ENCODE measurements at regions of chr21 and their contacts with region 1.

Region 1: GRCh38 chr21:33199516-33200217 is 30.1 kb upstream of the IFNAR2 start:
- DNase-seq: peak; percentile 73
- CTCF ChIP-seq: peak; percentile 76

Region 2: DNA sequence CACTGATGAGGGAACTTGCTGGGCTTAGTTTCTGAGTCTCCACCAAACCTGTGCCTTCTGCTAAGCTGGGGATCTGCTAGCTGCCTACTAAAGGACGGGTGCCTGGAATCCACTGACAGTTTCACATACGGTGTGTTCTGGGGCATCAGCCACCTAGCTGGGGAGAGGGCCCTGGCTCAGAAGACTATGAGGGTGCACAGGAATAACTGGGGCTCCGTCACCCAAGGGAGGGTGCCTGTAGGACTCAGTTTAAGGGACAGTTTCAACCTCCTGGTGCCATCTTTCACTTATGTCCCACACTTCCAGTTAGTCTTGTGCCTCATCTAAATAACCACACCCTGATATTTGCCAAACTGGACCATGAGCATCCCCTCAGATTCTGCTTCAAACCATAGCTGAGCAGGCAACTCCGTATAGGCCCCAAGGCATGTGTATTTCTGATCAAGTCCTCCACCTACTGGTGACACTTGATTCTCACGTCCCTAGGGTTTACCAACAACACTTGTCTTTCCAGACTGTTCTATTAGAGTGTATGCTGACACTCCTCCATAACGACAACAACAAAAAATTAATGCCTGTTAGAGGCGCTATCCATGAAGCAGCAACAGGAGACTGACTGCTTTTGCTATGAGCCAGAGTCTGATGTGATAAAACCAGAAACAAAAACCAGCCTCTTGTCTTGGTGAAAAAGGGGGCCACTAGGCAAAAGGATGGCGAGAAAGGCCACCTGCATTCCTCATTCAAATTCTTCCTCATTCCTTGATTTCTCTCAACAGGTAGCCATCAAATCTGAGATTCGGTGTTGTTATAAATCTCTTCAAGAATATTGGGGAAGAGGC is 373.1 kb before region 1 on chr21:
- CTCF ChIA-PET with region 1: interaction called, 23 read pairs
- POLR2A ChIA-PET with region 1: no interaction called
- DNase-seq: peak; percentile 72
- CTCF ChIP-seq: peak; percentile 70

Region 3: GRCh38 chr21:33185852-33186251 is 13.8 kb before region 1 on chr21:
- CTCF ChIA-PET with region 1: interaction called, 35 read pairs
- POLR2A ChIA-PET with region 1: interaction called, 4 read pairs
- DNase-seq: no peak
- CTCF ChIP-seq: no peak

Region 4: GRCh38 chr21:33266050-33266788 is 66.6 kb after region 1 on chr21 and contains the start of gene IL10RB:
- CTCF ChIA-PET with region 1: interaction called, 14 read pairs
- POLR2A ChIA-PET with region 1: no interaction called
- DNase-seq: peak; percentile 89
- CTCF ChIP-seq: no peak

Region 5: DNA sequence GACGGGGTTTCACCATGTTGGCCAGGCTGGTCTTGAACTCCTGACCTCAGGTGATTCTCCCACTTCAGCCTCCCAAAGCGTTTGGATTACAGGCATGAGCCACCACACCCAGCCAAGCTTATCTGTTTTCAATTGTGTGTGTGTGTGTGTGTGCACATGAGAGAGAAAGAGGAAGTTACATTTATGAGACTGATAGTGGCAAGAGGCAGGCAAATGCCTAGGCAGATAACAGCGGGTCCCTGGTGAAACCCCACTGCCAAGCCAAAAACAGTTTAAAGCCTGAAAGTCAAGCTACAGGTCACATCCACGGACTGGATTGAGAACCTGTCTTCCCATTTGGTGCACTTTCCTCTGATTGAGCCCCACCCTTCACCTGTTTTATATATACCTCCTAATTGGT is 168.5 kb after region 1 on chr21:
- CTCF ChIA-PET with region 1: interaction called, 10 read pairs
- POLR2A ChIA-PET with region 1: no interaction called
- DNase-seq: no peak
- CTCF ChIP-seq: no peak

Region 6: GRCh38 chr21:33461538-33462250 is 262.0 kb after region 1 on chr21:
- CTCF ChIA-PET with region 1: interaction called, 10 read pairs
- POLR2A ChIA-PET with region 1: no interaction called
- DNase-seq: no peak
- CTCF ChIP-seq: no peak